ENCODE measurements at regions of chr9 and their contacts with region 1.

Region 1: DNA sequence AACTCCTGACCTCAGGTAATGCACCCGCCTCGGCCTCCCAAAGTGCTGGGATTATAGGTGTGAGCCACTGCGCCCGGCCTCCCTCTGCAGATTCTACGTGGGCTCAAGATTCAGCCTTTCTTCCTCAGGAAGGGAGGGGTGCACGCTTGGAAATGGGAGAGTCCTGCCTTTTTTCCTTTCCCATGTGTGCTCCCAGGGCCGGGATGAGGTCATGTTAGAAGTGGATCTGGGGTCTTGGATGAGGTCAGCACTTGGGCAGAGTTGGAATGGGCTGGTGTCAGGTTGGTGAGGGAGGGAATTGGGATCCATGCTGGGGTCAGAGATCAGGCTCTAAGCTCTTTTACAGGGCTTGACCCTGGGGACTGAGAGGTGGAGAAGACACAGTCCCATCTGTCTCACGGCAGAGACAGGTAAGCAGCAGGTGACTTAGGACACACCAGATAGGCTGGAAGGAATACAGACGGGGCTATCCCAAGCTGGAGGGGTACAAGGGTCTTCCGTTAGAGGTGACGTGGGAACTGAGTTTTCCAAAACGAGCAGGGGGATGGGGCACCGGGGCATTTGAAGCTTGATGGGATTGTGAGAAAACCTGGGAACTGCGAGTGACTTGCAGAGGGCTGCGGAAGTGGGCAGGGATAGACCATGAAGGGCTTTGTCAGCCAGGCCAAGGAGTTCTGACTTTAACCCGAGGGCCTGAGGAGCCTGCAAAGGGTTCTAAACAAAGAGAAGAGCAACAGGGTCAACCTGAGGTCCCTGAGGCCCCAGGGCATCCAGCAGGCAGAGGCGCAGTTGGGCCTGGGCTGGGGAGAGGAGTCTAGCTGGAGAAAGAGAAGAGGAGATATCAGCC is 1.8 kb upstream of the AQP7 start:
- DNase-seq: no peak
- H3K4me3 Mint-ChIP-seq: no peak overlapping the region
- H3K27ac Mint-ChIP-seq: no peak overlapping the region
- H3K4me1 Mint-ChIP-seq: peaks cover 5% of the 10 kb centered on the region
- H3K27me3 Mint-ChIP-seq: no peaks in the 10 kb centered on the region

Region 2: DNA sequence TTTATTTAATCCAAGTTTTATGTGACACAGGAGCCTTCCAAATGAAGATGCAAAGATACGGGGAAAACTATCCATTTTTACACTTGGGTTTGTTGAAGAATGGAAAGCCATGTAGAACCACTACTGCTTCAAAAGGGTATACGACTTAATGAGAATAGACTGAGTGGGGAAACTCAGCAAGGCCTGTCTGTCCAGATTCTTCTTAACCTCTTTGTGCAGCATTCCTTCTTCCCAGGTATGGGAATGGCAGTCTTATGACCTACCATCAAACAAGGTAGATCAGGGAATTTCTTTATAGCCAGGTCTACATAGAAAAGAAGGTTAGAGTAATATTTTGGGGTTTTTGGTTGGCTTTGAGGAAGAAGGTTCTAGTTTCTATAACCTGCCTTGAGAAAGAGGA is 426.1 kb before region 1 on chr9:
- intact Hi-C with region 1: no loop called
- DNase-seq: no peak
- H3K4me3 Mint-ChIP-seq: no peak overlapping the region
- H3K27ac Mint-ChIP-seq: no peak overlapping the region
- H3K4me1 Mint-ChIP-seq: no peaks in the 10 kb centered on the region
- H3K27me3 Mint-ChIP-seq: no peaks in the 10 kb centered on the region

Region 3: GRCh38 chr9:33374634-33375213 is 29.4 kb before region 1 on chr9:
- intact Hi-C with region 1: loop called (anchors 1 kb)
- DNase-seq: peak; percentile 57
- H3K4me3 Mint-ChIP-seq: no peak overlapping the region
- H3K27ac Mint-ChIP-seq: peak overlapping the region; percentile 24
- H3K4me1 Mint-ChIP-seq: peaks cover 14% of the 10 kb centered on the region
- H3K27me3 Mint-ChIP-seq: no peaks in the 10 kb centered on the region

Region 4: GRCh38 chr9:33452828-33453271 is 48.7 kb after region 1 on chr9:
- intact Hi-C with region 1: loop called (anchors 2 kb)
- DNase-seq: no peak
- H3K4me3 Mint-ChIP-seq: no peak overlapping the region
- H3K27ac Mint-ChIP-seq: peak overlapping the region; percentile 31
- H3K4me1 Mint-ChIP-seq: peaks cover 52% of the 10 kb centered on the region
- H3K27me3 Mint-ChIP-seq: no peaks in the 10 kb centered on the region

Region 5: DNA sequence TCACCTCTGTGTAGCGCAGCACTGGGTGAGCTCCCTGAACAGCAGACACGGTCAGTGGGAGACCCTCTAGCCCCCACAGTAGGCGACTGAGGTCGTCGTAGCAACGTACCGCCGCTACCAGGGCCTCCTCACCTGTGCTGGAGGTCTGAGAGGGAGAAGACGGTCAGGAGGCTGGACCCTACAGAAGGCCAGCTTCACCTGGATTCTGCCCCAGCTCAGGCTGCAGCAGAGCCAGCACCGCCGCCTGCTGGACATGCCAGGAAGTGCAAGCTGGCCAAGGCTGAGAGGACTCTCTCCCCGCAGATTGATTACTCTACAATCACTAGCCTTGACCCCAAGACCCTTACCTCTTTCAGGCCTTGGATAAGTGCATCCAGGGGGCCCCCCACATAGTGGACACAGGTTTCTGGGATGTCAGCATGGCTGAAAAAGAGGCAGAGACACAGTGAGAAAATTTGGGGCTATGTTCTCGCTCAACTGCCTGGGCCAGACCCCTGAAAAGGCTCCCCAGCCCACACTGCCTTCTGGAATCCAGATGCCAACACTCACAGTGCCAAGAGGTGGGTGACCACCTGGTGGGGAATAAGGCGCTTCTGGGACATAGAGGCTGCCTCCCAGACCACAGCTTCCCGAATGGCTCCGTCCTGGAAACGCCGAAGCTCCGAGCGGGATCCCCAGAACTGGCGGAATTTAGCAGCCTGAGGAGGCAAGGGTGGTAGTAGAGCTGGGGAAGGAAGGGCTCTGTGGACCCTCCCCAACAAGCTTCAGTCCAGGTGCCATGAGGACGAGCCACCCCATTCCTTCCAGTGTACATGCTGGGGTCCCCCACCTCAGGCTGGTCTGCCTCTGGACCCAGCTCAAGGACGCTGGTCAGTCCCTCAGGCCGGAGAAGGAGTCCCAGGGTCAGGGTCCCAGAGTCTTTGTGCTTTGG is 62.7 kb after region 1 on chr9:
- intact Hi-C with region 1: loop called (anchors 1 kb)
- DNase-seq: peak; percentile 59
- H3K4me3 Mint-ChIP-seq: no peak overlapping the region
- H3K27ac Mint-ChIP-seq: no peak overlapping the region
- H3K4me1 Mint-ChIP-seq: peaks cover 8% of the 10 kb centered on the region
- H3K27me3 Mint-ChIP-seq: no peaks in the 10 kb centered on the region

Region 6: GRCh38 chr9:33517373-33517772 is 113.2 kb after region 1 on chr9:
- intact Hi-C with region 1: loop called (anchors 1 kb)
- DNase-seq: no peak
- H3K4me3 Mint-ChIP-seq: no peak overlapping the region
- H3K27ac Mint-ChIP-seq: no peak overlapping the region
- H3K4me1 Mint-ChIP-seq: no peaks in the 10 kb centered on the region
- H3K27me3 Mint-ChIP-seq: peaks cover 36% of the 10 kb centered on the region

Measured in activated T-helper 1 cell treated with anti-CD3 and anti-CD28 coated beads, Interleukin-12 subunit alpha, Interleukin-12 subunit beta, Interleukin-2, Interleukin-4 antibody, amounts not matched to agents 30 ng/mL and 10 ng/mL and 1 ng/mL, durations not matched to agents 14 hours and 24 hours and 36 hours (primary cell).